ENCODE measurements at regions of chr1 and their contacts with region 1.

Region 1: GRCh38 chr1:226332947-226333346 is 24.0 kb upstream of the LIN9 start:
- DNase-seq: no peak
- ATAC-seq: no peak
- H3K4me3 Mint-ChIP-seq: peak overlapping the region; percentile 1
- H3K27ac Mint-ChIP-seq: no peak overlapping the region
- H3K4me1 Mint-ChIP-seq: peaks cover 4% of the 10 kb centered on the region
- H3K27me3 Mint-ChIP-seq: peaks cover 5% of the 10 kb centered on the region

Region 2: GRCh38 chr1:225923692-225924555 is 409.0 kb before region 1 on chr1 and contains the start of gene PYCR2:
- CTCF ChIA-PET with region 1: no interaction called
- POLR2A ChIA-PET with region 1: no interaction called
- DNase-seq: peak; percentile 96
- ATAC-seq: peak; percentile 98
- H3K4me3 Mint-ChIP-seq: peak within 1 kb of the TSS; percentile 97
- H3K27ac Mint-ChIP-seq: peak within 1 kb of the TSS; percentile 97
- H3K4me1 Mint-ChIP-seq: peaks cover 65% of the 10 kb centered on the region
- H3K27me3 Mint-ChIP-seq: no peaks in the 10 kb centered on the region
- total RNA-seq, gene PYCR2: 122 to 126 TPM

Region 3: GRCh38 chr1:226046240-226046639 is 286.7 kb before region 1 on chr1:
- CTCF ChIA-PET with region 1: no interaction called
- POLR2A ChIA-PET with region 1: no interaction called
- DNase-seq: no peak
- ATAC-seq: no peak
- H3K4me3 Mint-ChIP-seq: no peak overlapping the region
- H3K27ac Mint-ChIP-seq: no peak overlapping the region
- H3K4me1 Mint-ChIP-seq: no peaks in the 10 kb centered on the region
- H3K27me3 Mint-ChIP-seq: peaks cover 6% of the 10 kb centered on the region

Region 4: GRCh38 chr1:226201029-226201593 is 131.8 kb before region 1 on chr1:
- CTCF ChIA-PET with region 1: interaction called, 28 read pairs
- POLR2A ChIA-PET with region 1: no interaction called
- DNase-seq: no peak
- ATAC-seq: peak; percentile 44
- H3K4me3 Mint-ChIP-seq: no peak overlapping the region
- H3K27ac Mint-ChIP-seq: no peak overlapping the region
- H3K4me1 Mint-ChIP-seq: peaks cover 2% of the 10 kb centered on the region
- H3K27me3 Mint-ChIP-seq: peaks cover 11% of the 10 kb centered on the region

Region 5: DNA sequence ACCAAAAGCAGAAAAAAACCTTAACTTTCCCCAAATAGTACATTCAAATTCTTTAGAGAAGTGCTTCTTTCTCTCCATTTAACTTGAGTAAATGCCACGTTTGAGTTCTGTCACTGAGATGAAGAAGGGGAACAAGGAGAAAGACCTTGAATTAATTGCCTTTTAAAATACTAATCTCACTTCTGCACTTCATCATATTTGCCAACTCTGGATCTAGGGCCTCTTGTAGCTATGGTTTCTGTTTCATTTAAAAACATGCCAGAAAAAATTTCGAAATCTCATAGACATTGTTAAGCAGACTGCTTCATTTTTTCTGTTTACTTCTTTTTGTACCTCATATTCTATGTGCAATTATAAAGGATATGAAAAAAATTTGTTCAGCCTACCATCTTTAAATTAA is 84.9 kb before region 1 on chr1:
- CTCF ChIA-PET with region 1: interaction called, 13 read pairs
- POLR2A ChIA-PET with region 1: no interaction called
- DNase-seq: no peak
- ATAC-seq: no peak
- H3K4me3 Mint-ChIP-seq: no peak overlapping the region
- H3K27ac Mint-ChIP-seq: no peak overlapping the region
- H3K4me1 Mint-ChIP-seq: no peaks in the 10 kb centered on the region
- H3K27me3 Mint-ChIP-seq: no peaks in the 10 kb centered on the region

Region 6: GRCh38 chr1:226308723-226309315 is 24.1 kb before region 1 on chr1 and contains the start of gene LIN9:
- CTCF ChIA-PET with region 1: interaction called, 35 read pairs
- POLR2A ChIA-PET with region 1: interaction called, 8 read pairs
- DNase-seq: peak; percentile 95
- ATAC-seq: peak; percentile 91
- H3K4me3 Mint-ChIP-seq: peak within 1 kb of the TSS; percentile 90
- H3K27ac Mint-ChIP-seq: peak within 1 kb of the TSS; percentile 92
- H3K4me1 Mint-ChIP-seq: peaks cover 28% of the 10 kb centered on the region
- H3K27me3 Mint-ChIP-seq: peaks cover 14% of the 10 kb centered on the region
- total RNA-seq, gene LIN9: 13.3 to 14.9 TPM